ENCODE measurements at regions of chr7 and their contacts with region 1.

Region 1: DNA sequence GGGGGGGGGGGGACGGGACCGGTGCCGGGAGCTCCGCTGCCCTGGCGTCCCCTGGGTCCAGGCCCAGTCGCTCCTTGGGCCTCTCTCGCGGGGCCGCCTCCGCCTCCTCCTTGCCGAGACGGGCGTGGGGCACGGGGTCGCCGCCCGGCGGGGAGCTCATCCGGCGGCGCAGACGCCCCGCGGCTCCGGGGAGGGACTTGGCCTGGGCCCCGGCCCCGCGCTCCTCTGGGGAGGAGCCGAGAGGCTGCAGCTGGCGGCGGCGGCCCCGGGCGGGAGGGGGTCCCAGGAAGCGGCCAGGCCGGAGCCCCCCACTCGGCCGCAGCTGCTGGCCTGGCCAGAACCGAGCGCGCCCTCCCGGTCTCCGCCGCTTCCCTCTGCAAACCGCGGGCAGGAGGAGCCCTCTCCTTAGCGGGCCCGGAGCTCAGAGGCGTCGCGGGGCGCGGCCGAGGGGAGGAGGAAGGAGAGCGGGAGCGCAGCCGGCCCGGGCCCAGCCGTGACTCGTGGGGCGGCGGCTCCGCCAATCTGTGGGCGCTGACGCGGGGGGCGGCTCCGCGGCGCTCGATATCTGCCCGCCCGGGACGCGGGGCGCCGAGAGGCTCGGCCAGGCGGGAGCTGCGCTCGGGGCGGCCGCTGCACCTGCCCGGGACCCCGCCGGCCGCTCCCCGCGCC is at the start of gene FAM20C:
- DNase-seq: peak; percentile 90 to 93
- ATAC-seq: peak; percentile 81 to 84 (median 82)
- H3K4me3 ChIP-seq: peak within 1 kb of the TSS; percentile 84
- H3K27ac ChIP-seq: peak within 1 kb of the TSS; percentile 93
- H3K4me1 ChIP-seq: peaks cover 32% of the 10 kb centered on the region
- H3K27me3 ChIP-seq: no peaks in the 10 kb centered on the region
- CTCF ChIP-seq: no peak
- total RNA-seq, gene FAM20C: 28.1 to 47.6 (median 43.6) TPM

Region 2: DNA sequence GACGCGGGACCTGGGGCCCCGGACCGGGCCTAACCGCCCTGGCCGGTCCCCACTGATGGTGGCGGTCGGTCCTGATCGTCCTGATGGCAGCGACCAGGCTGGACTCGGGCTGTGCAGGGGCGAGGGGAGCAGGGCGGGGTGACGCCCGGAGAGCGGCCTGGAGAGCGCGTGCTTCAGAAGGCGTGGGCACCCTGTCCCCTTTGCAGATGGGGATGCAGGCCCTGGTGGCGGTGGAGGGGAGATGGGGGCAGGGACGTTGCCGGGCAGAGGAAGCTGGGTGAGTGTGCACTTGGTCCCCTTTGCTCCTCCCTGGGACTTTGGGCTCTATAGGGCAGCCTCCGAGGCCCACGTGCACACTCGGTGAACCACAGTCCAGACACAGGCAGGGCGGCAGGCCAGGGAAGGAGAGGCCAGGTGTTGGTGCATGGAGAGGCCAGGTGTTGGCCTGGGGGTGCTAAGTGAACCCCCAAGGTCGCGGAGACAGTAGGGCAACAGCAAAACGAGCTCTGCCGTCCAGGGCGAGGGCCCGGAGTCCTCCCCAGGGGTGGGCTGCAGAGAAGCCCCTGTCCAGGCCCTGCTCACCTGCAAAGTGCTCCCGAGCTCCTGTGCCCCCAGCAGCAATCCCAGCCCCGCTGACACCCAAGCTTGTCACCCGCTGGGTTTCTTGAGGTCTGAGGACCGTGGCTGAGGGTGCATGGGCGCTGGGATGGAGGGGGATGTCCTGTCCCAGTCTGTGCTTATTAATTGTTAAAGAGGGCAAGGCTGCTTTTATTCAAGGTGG is 42.1 kb before region 1 on chr7:
- intact Hi-C with region 1: loop called in 1 of 2 experiments (anchors 5 kb)
- DNase-seq: peak; percentile 68 to 79
- ATAC-seq: peak; percentile 34 to 56 (median 39)
- H3K4me3 ChIP-seq: peak overlapping the region; percentile 69
- H3K27ac ChIP-seq: peak overlapping the region; percentile 88
- H3K4me1 ChIP-seq: peaks cover 12% of the 10 kb centered on the region
- H3K27me3 ChIP-seq: no peaks in the 10 kb centered on the region
- CTCF ChIP-seq: no peak

Region 3: DNA sequence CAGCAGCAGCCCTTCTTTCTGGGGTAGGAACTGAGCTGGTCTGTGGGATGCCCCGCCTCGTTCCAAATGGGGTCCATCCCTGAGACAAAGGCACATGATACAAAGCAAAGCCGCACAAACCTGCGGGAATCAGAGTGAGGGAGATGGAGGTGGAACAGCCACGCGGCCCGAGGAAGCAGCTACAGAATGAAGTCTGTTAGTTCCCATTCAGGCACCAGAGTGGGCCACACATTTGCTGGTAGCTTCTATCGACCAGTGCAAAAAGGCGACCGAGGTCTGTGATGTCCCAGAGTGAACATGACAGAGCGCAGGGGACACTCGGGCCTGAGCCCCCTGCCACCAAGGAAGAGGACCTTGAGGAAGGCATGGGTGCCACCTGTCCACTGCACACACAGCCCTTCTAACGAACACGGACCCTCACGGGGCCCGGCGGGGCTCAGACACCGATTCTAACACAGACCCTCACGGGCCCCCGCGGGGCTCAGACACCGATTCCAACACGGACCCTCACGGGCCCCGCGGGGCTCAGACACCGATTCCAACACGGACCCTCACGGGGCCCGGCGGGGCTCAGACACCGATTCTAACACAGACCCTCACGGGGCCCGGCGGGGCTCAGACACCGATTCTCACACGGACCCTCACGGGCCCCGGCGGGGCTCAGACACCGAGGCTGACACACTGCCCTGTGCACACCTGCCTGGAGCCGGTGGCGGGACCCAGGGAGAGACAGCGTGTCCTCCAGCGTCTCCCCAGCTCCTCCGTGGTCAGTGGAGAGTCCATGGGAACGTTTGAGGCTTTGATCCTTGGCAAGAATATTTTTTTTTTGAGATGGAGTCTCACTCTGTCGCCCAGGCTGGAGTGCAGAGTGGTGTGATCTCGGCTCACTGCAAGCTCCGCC is 32.5 kb before region 1 on chr7:
- intact Hi-C with region 1: loop called (anchors 2 to 5 kb)
- DNase-seq: peak in 1 of 2 donors; percentile 63
- ATAC-seq: peak in 1 of 4 donors; percentile 16
- H3K4me3 ChIP-seq: no peak overlapping the region
- H3K27ac ChIP-seq: no peak overlapping the region
- H3K4me1 ChIP-seq: peaks cover 19% of the 10 kb centered on the region
- H3K27me3 ChIP-seq: no peaks in the 10 kb centered on the region
- CTCF ChIP-seq: no peak

Region 4: GRCh38 chr7:229184-229964 is 37.3 kb after region 1 on chr7:
- intact Hi-C with region 1: loop called (anchors 1 to 5 kb)
- DNase-seq: peak; percentile 88 to 89
- ATAC-seq: peak; percentile 76 to 83 (median 81)
- H3K4me3 ChIP-seq: peak overlapping the region; percentile 44
- H3K27ac ChIP-seq: peak overlapping the region; percentile 92
- H3K4me1 ChIP-seq: peaks cover 61% of the 10 kb centered on the region
- H3K27me3 ChIP-seq: no peaks in the 10 kb centered on the region
- CTCF ChIP-seq: no peak

Region 5: GRCh38 chr7:234655-235578 is 42.8 kb after region 1 on chr7:
- intact Hi-C with region 1: loop called in 1 of 2 experiments (anchors 5 kb)
- DNase-seq: peak; percentile 81 to 82
- ATAC-seq: peak; percentile 71 to 81 (median 72)
- H3K4me3 ChIP-seq: peak overlapping the region; percentile 51
- H3K27ac ChIP-seq: peak overlapping the region; percentile 92
- H3K4me1 ChIP-seq: peaks cover 60% of the 10 kb centered on the region
- H3K27me3 ChIP-seq: no peaks in the 10 kb centered on the region
- CTCF ChIP-seq: no peak

Region 6: GRCh38 chr7:435630-436366 is 243.7 kb after region 1 on chr7:
- intact Hi-C with region 1: no loop called
- DNase-seq: peak; percentile 70 to 71
- ATAC-seq: no peak
- H3K4me3 ChIP-seq: no peak overlapping the region
- H3K27ac ChIP-seq: no peak overlapping the region
- H3K4me1 ChIP-seq: peaks cover 6% of the 10 kb centered on the region
- H3K27me3 ChIP-seq: no peaks in the 10 kb centered on the region
- CTCF ChIP-seq: no peak

Region 7: GRCh38 chr7:867672-868486 is 675.8 kb after region 1 on chr7:
- intact Hi-C with region 1: no loop called
- DNase-seq: peak; percentile 67 to 85
- ATAC-seq: peak; percentile 77 to 92 (median 90)
- H3K4me3 ChIP-seq: no peak overlapping the region
- H3K27ac ChIP-seq: peak overlapping the region; percentile 74
- H3K4me1 ChIP-seq: peaks cover 15% of the 10 kb centered on the region
- H3K27me3 ChIP-seq: no peaks in the 10 kb centered on the region
- CTCF ChIP-seq: no peak

Measured in psoas muscle (tissue), 8 donors.